ENCODE measurements at regions of chr12 and their contacts with region 1.

Region 1: GRCh38 chr12:52380271-52380694 is 5.2 kb downstream of the KRT84 start:
- DNase-seq: peak; percentile 44
- H3K4me3 ChIP-seq: no peak overlapping the region
- H3K27ac ChIP-seq: no peak overlapping the region
- H3K4me1 ChIP-seq: no peaks in the 10 kb centered on the region
- H3K27me3 ChIP-seq: no peaks in the 10 kb centered on the region
- CTCF ChIP-seq: peak in 4 of 5 experiments; percentile 28 to 53 (median 47)
- EP300 ChIP-seq: no peak
- POLR2A ChIP-seq: no peak

Region 2: DNA sequence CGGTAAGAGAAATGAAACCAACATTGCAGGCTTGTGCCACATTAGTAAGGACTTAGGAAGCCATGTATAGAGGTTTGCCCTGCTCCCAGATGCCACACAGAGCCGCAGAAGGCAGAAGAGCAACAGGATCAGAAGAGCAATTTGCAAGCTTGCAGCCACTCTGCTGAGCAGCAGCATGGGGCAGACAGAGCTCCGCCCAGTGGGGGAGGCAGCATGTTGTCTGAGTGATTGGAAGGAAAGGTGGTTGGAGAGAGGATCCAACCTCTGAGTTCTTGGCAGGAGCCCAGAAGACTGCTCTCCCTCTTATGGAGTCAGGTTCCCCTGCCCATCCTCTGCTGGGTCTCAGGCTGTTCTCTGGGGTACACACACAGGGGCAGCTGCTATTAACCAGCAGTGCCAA is 115.1 kb after region 1 on chr12:
- in situ Hi-C with region 1: loop called in 1 of 4 experiments (anchors 10 kb)
- intact Hi-C with region 1: no loop called
- DNase-seq: no peak
- H3K4me3 ChIP-seq: no peak overlapping the region
- H3K27ac ChIP-seq: no peak overlapping the region
- H3K4me1 ChIP-seq: peaks cover 0 to 6% (median 0%) of the 10 kb centered on the region in 4 donors
- H3K27me3 ChIP-seq: no peaks in the 10 kb centered on the region
- CTCF ChIP-seq: no peak
- EP300 ChIP-seq: no peak
- POLR2A ChIP-seq: no peak

Region 3: DNA sequence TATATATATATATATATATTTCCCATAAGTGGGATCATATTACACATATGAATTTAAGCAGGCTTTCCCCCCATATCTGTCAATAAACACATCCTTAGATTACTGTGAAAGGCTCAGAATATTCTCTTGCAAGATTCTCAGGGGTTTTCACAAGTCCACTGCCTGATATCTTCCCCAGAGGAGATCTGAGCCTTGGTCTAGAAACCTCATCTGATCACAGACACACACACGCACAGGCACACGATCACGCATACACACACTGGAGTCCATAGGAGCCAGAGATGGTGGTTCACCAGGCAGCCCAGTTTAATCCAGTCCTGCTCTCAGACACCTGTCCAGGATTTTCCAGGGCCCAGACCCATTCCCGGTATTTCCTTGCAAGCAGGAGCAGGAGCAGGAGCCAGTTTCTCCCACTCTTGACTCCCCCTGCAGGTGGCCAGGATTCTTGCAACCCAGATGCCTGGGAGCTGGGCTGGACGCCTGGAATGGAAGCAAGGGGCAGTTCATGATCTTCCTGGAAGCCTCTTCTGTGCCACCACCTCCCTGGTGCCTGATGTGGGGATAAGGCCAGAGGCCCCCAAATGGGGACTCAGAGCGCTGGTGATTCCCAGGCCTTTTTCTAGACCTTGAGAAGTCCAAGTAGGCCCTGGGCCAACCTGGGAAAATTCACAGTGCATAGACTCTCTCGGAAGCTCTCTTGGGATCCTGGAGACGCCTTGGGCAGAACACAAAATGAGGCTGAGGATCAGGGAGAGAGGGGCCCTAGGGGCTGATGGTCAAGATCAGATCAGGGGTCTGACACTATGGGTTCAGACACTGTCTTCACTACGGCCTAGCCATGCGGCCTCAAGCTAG is 485.0 kb after region 1 on chr12:
- in situ Hi-C with region 1: loop called in 3 of 4 experiments (anchors 10 to 25 kb)
- intact Hi-C with region 1: loop called (anchors 10 kb)
- DNase-seq: peak; percentile 80
- H3K4me3 ChIP-seq: no peak overlapping the region
- H3K27ac ChIP-seq: no peak overlapping the region
- H3K4me1 ChIP-seq: peaks cover 0 to 14% (median 12%) of the 10 kb centered on the region in 4 donors
- H3K27me3 ChIP-seq: no peaks in the 10 kb centered on the region
- CTCF ChIP-seq: peak; percentile 58 to 84 (median 78)
- EP300 ChIP-seq: no peak
- POLR2A ChIP-seq: no peak

Region 4: GRCh38 chr12:52870351-52871290 is 490.3 kb after region 1 on chr12:
- in situ Hi-C with region 1: loop called in 3 of 4 experiments (anchors 10 to 25 kb)
- intact Hi-C with region 1: loop called (anchors 10 kb)
- DNase-seq: peak; percentile 91
- H3K4me3 ChIP-seq: no peak overlapping the region
- H3K27ac ChIP-seq: peak overlapping the region; percentile 73 to 97 (median 90)
- H3K4me1 ChIP-seq: peaks cover 20 to 61% (median 59%) of the 10 kb centered on the region in 4 donors
- H3K27me3 ChIP-seq: no peaks in the 10 kb centered on the region
- CTCF ChIP-seq: peak; percentile 57 to 92 (median 72)
- EP300 ChIP-seq: no peak
- POLR2A ChIP-seq: no peak

Region 5: DNA sequence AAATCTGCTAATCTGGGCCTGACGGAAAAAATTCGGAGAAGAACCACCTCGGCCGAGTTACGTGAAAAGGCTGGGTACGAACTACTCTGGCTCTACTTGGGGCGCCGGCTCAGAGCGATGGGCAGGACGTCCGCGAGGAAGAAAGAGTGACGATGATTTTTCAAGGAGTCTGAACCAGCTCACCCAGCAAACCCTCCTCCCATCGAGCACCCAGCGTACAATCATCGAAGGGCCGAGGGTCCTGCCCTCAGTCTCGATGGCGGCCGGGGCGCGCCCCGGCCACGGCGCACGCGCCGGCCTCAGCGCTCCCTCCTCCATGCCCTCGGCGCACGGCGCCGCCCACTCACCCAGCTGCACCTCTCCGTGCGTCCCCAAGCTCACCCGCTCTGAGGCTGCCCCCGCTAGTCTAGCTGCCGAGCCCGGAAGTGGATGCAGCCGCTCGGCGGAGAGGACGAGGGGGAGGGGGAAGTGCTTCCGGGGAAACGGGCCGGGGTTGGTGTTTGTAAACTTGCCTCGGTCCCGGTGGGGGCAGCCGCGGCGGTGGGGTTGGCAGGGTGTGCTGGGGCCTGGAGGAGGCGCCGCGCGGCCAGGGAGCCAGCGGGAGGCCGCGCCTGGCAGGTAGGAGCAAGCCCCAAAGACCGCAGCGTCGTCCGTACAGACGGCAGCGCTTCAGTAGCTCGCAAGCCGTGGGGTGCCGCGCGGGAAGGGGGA is 800.1 kb after region 1 on chr12 and contains the starts of genes CSAD and ZNF740:
- in situ Hi-C with region 1: no loop called
- intact Hi-C with region 1: no loop called
- DNase-seq: peak; percentile 98
- H3K4me3 ChIP-seq: peak within 1 kb of the TSS; percentile 72 to 90 (median 82)
- H3K27ac ChIP-seq: peak within 1 kb of the TSS; percentile 92 to 99 (median 96)
- H3K4me1 ChIP-seq: peaks cover 33 to 41% (median 36%) of the 10 kb centered on the region in 4 donors
- H3K27me3 ChIP-seq: no peaks in the 10 kb centered on the region
- CTCF ChIP-seq: no peak
- EP300 ChIP-seq: no peak
- POLR2A ChIP-seq: peak; percentile 85
- total RNA-seq, gene CSAD: 29.1 to 142 (median 39.2) TPM
- total RNA-seq, gene ZNF740: 9.7 to 21.9 (median 16.3) TPM

Measured in transverse colon (tissue), 4 donors.